Activated T-helper 1 cell treated with anti-CD3 and anti-CD28 coated beads, Interleukin-12 subunit alpha, Interleukin-12 subunit beta, Interleukin-2, Interleukin-4 antibody, amounts not matched to agents 30 ng/mL and 10 ng/mL and 1 ng/mL, durations not matched to agents 14 hours and 24 hours and 36 hours (primary cell): ENCODE measurements at regions of chr1 and their contacts with region 1.

Region 1: GRCh38 chr1:32753532-32754312 is 51.2 kb upstream of the SYNC start:
- DNase-seq: peak; percentile 66
- H3K4me3 Mint-ChIP-seq: peak overlapping the region; percentile 80
- H3K27ac Mint-ChIP-seq: peak overlapping the region; percentile 59
- H3K4me1 Mint-ChIP-seq: peaks cover 11% of the 10 kb centered on the region
- H3K27me3 Mint-ChIP-seq: peaks cover 46% of the 10 kb centered on the region

Region 2: DNA sequence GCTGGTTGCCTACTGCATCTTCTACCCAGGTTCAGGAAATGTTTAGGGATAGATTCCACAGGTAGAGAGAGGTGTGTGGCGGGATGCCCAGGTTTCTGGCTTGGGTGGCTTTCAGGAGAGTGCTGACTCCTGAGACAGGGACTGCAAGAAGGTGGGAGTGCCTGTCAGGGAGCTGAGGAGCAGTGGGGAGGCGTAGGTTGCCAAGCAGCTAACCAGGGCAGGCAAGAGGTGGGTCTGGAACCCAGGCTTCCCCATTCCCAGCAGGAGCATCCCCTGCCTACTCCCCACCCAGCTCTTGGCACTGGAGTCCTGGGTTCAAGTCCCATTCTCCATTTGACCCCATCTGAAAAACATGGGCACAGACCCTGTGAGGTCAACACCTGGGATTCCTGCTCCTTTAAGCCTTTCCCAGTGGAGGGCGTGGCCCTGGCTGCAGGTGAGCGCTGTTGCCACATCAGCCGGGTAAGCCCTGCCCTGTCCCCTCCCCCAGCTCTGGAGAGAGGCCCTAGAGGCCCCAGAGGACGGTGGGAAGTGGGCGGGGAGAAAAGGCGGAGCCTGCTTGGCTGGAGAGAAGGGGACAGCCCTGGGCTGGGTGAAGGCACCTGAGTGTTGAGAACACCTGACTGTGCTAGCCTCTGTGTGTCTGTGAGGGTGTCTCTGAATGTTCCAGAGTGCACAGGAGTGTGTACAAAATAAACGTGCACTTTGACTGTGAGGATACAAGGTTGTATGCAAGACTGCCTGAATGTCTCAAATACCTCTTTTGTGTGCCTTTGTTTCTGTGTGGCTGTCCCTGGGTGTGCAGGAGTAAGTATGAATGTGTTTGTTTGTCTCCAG is 37.2 kb before region 1 on chr1:
- intact Hi-C with region 1: loop called (anchors 1 kb)
- DNase-seq: peak; percentile 60
- H3K4me3 Mint-ChIP-seq: no peak overlapping the region
- H3K27ac Mint-ChIP-seq: no peak overlapping the region
- H3K4me1 Mint-ChIP-seq: peaks cover 10% of the 10 kb centered on the region
- H3K27me3 Mint-ChIP-seq: peaks cover 12% of the 10 kb centered on the region

Region 3: DNA sequence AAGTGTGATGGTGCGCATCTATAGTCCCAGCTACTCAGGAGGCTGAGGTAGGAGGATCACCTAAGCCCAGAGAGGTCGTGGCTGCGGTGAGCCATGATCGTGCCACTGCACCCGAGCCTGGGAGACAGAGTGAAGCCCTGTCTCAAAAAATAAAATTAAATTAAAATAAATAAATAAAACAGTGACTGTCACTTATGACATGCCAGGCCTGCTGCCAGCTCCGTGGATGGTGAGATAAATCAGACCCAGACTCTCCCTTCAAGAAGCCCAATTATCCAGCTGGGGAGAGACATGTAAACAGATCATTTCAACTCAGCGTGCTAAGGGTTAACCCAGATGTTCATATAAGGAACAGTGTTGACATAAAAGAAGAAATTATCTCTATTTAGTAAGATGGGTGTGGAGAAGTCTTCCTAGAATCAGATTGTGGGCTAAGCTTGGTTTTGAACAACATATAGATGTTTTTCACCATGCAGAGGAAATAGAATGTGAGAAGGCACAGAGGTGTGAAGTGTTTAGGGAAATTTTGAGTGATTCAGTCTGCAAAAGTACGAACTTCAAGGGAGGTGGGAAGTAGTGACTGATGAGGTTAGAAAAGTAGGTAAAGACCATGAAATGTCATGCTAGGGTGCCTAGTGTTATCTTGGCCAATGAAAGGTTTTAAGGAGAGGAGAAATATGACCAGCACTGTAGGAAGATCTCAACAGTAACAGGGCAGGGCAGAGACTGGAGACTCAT is 45.1 kb after region 1 on chr1:
- intact Hi-C with region 1: loop called (anchors 1 kb)
- DNase-seq: peak; percentile 49
- H3K4me3 Mint-ChIP-seq: peak overlapping the region; percentile 68
- H3K27ac Mint-ChIP-seq: peak overlapping the region; percentile 96
- H3K4me1 Mint-ChIP-seq: peaks cover 47% of the 10 kb centered on the region
- H3K27me3 Mint-ChIP-seq: no peaks in the 10 kb centered on the region